ENCODE measurements at regions of chr1 and their contacts with region 1.

Region 1: DNA sequence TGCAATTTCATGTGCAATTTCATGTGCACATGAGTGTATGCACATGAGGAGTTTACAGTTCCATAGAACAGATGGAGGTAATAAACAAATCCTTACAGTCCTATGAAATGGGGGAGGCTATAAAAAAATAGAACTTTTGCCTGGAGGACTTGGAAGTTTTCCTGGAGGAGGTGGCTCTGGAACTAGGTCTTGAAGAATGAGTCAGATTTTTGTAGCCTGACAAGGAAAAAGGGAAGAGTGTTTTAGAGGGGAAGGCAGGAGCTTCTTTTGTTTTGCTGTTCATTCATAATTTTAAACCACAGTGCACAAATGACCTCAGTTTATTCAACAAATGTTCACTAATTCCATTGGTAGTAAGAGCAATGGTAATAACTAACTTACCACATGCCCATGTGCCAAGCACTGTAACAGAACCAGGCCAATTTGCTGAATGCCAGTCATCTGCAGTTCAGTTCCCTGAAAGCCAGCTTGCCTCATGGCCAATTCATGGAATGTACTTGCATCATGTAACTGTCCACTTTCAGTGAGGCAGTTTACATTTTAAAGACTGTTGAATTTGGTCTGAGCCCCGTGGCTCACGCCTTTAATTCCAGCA is 2.7 kb downstream of the DIO1 start:
- DNase-seq: no peak
- H3K4me3 ChIP-seq: no peak overlapping the region
- H3K27ac ChIP-seq: peak overlapping the region in 3 of 4 donors; percentile 58 to 63 (median 62)
- H3K4me1 ChIP-seq: peaks cover 0 to 56% (median 20%) of the 10 kb centered on the region in 3 donors
- H3K27me3 ChIP-seq: no peaks in the 10 kb centered on the region
- CTCF ChIP-seq: no peak
- POLR2A ChIP-seq: no peak

Region 2: GRCh38 chr1:53938136-53938830 is 41.6 kb after region 1 on chr1:
- intact Hi-C with region 1: loop called (anchors 5 kb)
- DNase-seq: no peak
- H3K4me3 ChIP-seq: no peak overlapping the region
- H3K27ac ChIP-seq: no peak overlapping the region
- H3K4me1 ChIP-seq: peaks cover 0 to 5% (median 0%) of the 10 kb centered on the region in 3 donors
- H3K27me3 ChIP-seq: no peaks in the 10 kb centered on the region
- CTCF ChIP-seq: no peak
- POLR2A ChIP-seq: no peak

Region 3: DNA sequence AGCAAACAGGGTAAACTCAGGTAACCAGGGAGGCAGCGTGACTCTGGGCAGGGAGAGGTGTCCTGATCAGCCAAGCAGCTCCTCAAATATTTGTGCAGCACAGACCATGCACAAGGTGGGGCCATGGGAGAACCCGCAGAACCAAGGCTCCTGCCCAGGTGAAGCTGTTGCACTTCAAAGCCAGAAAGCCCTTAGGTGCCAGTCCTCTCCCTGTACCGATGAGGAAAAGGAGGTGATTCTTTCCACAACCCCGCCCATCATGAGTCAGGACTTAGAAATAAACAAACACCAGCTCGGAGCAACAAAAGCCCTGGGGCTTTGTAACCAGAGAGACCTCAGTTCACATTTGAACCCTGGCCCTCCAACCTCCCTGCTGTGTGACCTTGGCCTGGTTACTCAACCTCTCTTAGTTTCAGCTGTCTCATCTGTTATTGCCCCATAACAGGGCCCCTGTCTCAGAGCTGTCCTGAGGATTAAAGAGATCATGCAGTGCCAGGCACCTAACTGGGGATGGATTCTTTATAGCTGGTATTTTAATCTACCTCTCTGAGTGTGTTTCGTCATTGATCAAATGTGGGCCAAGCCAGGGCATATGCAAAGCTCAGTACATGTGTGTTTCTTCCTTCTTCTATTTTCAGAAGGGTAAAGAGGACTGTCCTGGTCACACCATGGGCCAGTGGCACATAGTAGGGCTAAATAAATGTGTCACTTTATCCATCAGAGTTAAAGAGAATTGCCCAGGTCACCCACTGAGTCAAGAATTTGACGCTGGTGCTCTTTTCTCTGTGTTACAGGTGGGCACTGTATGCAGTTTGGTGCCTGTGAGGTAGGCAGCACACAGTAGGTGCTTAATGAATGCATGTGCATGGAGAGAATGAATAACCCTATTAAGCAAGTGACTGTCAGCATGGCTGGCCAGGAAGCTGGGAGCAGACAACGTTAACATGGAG is 119.9 kb after region 1 on chr1:
- intact Hi-C with region 1: no loop called
- DNase-seq: no peak
- H3K4me3 ChIP-seq: no peak overlapping the region
- H3K27ac ChIP-seq: peak overlapping the region; percentile 71 to 83 (median 76)
- H3K4me1 ChIP-seq: peaks cover 10 to 44% (median 10%) of the 10 kb centered on the region in 3 donors
- H3K27me3 ChIP-seq: peaks cover 0 to 27% (median 0%) of the 10 kb centered on the region in 4 donors
- CTCF ChIP-seq: no peak
- POLR2A ChIP-seq: peak in 1 of 4 donors; percentile 10

Measured in esophagus squamous epithelium (tissue), 5 donors.